Activated CD4-positive, alpha-beta T cell treated with anti-CD3 and anti-CD28 coated beads for 36 hours (primary cell): ENCODE measurements at regions of chr18 and their contacts with region 1.

Region 1: DNA sequence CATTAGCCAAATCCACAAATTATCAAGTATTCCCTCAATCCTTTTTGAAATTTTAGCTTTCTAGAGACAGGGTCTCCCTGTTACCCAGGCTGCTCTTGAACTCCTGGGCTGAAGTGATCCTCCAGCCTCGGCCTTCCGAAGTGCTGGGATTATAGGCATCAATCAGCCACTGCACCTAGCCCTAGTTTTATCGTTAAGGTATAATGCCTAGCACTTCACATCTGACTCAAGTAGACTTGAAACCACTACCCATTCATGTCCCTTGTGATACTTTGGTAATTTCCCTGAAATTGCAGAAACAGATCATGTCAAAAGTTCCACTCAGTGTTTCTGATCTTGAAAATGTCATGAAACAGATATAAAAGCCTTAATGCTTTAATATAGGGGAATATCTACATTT is 26.3 kb downstream of the MEX3C start:
- DNase-seq: no peak
- ATAC-seq: peak; percentile 83
- H3K4me3 Mint-ChIP-seq: peak overlapping the region; percentile 64
- H3K27ac Mint-ChIP-seq: peak overlapping the region; percentile 92
- H3K4me1 Mint-ChIP-seq: peaks cover 62% of the 10 kb centered on the region
- H3K27me3 Mint-ChIP-seq: no peaks in the 10 kb centered on the region

Region 2: DNA sequence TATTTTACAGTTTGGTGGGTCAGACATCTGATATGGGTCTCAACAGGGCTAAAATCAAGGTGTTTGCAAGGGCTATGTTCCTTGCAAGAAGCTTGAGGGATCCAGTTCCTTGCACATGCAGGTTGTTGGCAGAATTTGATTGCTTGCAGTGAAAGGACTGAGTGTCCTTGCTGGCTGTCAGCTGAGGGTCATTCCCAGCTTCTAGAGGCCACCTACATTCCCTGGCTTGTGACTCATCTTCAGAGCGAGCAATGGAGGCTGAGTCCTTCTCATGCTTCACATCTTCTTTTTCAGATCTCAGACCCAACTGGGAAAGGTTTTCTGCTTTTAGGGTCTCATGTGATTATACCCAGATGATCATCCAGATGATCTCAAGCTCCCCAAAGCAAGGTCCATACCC is 13.9 kb after region 1 on chr18:
- CTCF ChIA-PET with region 1: interaction called, 6 read pairs
- POLR2A ChIA-PET with region 1: interaction called, 4 read pairs
- intact Hi-C with region 1: loop called in 1 of 2 experiments (anchors 1 kb)
- DNase-seq: no peak
- ATAC-seq: no peak
- H3K4me3 Mint-ChIP-seq: no peak overlapping the region
- H3K27ac Mint-ChIP-seq: no peak overlapping the region
- H3K4me1 Mint-ChIP-seq: peaks cover 72% of the 10 kb centered on the region
- H3K27me3 Mint-ChIP-seq: no peaks in the 10 kb centered on the region

Region 3: GRCh38 chr18:51191139-51191717 is 20.0 kb after region 1 on chr18:
- CTCF ChIA-PET with region 1: interaction called, 8 read pairs
- POLR2A ChIA-PET with region 1: interaction called, 5 read pairs
- intact Hi-C with region 1: loop called in 1 of 2 experiments (anchors 1 kb)
- DNase-seq: peak; percentile 48
- ATAC-seq: peak; percentile 73
- H3K4me3 Mint-ChIP-seq: peak overlapping the region; percentile 12
- H3K27ac Mint-ChIP-seq: peak overlapping the region; percentile 12
- H3K4me1 Mint-ChIP-seq: peaks cover 73% of the 10 kb centered on the region
- H3K27me3 Mint-ChIP-seq: no peaks in the 10 kb centered on the region

Region 4: DNA sequence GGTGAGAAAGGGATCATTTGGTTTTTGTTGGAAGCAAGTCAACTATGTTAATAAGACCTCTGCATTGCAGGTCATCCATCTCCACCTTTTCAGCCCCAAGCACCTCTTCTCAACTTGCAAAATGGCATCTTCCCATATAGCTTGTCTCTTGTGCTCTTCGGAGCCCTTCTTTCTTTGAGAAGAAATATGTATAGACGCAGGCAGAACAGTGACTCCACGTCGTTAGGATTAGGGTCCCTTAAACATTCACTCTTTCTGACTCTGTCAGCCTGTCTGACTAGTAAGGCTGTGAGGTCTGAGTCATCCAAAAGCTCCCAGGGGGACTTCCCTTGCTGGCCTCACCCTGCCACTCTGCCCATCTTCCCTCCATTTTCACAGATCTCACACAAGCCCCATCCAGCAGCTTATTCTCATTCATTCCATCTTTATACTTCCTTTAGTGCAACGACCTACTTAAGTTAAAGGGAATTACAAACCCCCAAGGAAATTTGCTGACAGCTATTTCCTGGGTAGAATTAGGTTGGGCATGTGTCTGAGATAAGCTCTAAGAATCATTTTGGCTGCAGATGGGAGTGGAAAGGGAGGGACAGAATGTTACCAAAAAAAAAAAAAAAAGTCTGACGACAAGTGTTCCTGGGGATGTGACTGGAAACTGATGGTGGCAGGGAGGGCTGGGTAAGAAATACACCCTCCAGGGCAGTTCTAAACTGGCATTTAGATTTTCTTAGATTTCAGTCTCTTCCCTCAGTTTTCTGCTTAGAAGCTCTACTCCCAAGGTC is 64.0 kb after region 1 on chr18:
- CTCF ChIA-PET with region 1: no interaction called
- POLR2A ChIA-PET with region 1: no interaction called
- intact Hi-C with region 1: loop called in 1 of 2 experiments (anchors 2 kb)
- DNase-seq: peak; percentile 68
- ATAC-seq: peak; percentile 99
- H3K4me3 Mint-ChIP-seq: no peak overlapping the region
- H3K27ac Mint-ChIP-seq: no peak overlapping the region
- H3K4me1 Mint-ChIP-seq: peaks cover 17% of the 10 kb centered on the region
- H3K27me3 Mint-ChIP-seq: peaks cover 6% of the 10 kb centered on the region